ENCODE measurements at regions of chr17 and their contacts with region 1.

Region 1: GRCh38 chr17:4806777-4807604 is at the start of gene PLD2:
- DNase-seq: peak; percentile 79 to 91 (median 84)
- H3K4me3 ChIP-seq: peak within 1 kb of the TSS; percentile 18 to 70 (median 40)
- H3K27ac ChIP-seq: peak within 1 kb of the TSS in 3 of 5 donors; percentile 23 to 79 (median 57)
- H3K4me1 ChIP-seq: peaks cover 11 to 19% of the 10 kb centered on the region in 2 donors
- H3K27me3 ChIP-seq: no peaks in the 10 kb centered on the region
- CTCF ChIP-seq: peak in 1 of 6 experiments; percentile 24
- POLR2A ChIP-seq: peak in 1 of 2 donors; percentile 27
- total RNA-seq, gene PLD2: 5.9 to 27.1 (median 16.4) TPM

Region 2: DNA sequence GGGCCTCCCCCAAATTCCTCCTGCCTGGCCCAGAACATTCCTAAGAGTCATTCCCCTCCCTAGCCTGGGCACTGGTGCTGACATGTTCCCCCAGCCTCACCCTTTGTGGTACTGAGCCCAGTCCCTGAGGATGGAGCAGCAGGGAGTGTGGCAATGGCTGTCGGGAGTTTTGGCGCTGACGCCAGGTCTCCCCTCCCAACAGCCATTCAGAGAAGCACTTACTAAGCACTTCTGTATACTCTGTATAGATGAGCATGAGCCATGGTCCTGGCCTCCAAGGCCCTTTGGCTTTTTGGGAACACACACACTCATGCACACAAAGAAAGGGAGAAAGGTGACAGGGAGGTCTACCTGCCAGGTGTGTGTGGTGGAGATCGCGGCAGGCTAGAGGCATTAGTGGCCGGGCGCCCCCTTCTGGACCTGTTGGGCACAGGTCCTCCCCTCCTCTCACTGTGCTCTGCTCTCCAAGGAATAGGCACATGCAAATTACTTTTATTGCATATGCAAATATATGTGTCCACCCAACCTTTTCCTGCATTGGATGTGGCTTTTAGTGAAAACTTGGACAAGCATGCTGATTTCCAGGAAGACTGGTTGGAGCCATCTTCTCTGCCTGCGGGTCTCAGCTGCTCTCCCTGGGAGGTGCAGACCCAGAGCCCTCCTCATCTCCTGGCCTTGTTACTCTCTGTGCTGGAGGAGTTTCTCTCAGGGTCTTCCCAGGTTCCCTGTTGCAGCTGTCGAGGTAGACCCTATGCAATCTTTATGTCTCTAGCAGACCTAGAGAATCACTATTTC is 75.0 kb after region 1 on chr17:
- intact Hi-C with region 1: loop called in 1 of 2 experiments (anchors 5 kb)
- DNase-seq: peak in 6 of 7 donors; percentile 47 to 73 (median 62)
- H3K4me3 ChIP-seq: no peak overlapping the region
- H3K27ac ChIP-seq: peak overlapping the region in 1 of 5 donors; percentile 8
- H3K4me1 ChIP-seq: no peaks in the 10 kb centered on the region
- H3K27me3 ChIP-seq: no peaks in the 10 kb centered on the region
- CTCF ChIP-seq: peak; percentile 67 to 83 (median 74)
- POLR2A ChIP-seq: no peak

Measured in adrenal gland (tissue), 19 donors.